ENCODE measurements at regions of chr15 and their contacts with region 1.

Region 1: DNA sequence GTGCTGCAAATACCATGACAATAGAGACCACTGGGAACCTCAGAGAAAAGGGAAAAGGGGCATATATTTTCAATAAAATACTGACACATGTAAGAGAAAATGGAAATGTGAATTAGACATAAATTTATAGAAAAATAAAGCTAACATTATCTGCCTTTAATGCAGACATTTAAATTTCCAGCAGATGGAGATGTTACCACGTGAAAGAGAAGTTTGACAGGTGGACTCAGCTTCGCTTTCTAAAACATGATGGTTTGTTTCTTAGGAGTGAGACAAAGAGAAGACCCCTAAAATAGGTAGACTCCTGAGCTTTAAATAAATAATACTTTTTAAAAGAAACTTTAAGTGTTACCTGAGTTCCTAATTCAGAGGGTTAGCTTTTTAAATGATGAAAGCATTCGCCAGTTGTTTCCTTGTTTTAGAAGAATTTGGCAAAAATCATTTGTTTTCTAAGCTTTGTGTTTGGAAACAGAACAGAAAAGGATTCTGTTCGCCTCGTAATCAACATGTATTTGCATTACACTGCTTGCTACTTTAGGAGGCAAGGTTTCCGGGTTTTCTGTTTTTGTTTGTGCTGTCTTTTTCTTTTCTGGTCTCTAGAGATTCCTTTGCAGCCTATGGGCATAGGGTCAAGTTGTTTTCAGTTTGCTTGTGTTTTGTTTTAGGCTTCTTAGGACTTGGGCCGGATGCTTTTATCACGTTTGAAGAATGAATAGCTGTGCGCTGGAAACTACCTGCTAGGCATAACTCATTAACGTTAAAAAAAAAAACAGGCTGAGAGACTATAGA is 271.4 kb downstream of the THSD4 start:
- DNase-seq: no peak
- ATAC-seq: peak in 3 of 8 donors; percentile 55 to 60 (median 59)
- H3K4me3 ChIP-seq: no peak overlapping the region
- H3K27ac ChIP-seq: no peak overlapping the region
- H3K4me1 ChIP-seq: peaks cover 0 to 52% (median 21%) of the 10 kb centered on the region in 9 donors
- H3K27me3 ChIP-seq: no peaks in the 10 kb centered on the region
- CTCF ChIP-seq: peak in 8 of 9 donors; percentile 28 to 64 (median 52)

Region 2: DNA sequence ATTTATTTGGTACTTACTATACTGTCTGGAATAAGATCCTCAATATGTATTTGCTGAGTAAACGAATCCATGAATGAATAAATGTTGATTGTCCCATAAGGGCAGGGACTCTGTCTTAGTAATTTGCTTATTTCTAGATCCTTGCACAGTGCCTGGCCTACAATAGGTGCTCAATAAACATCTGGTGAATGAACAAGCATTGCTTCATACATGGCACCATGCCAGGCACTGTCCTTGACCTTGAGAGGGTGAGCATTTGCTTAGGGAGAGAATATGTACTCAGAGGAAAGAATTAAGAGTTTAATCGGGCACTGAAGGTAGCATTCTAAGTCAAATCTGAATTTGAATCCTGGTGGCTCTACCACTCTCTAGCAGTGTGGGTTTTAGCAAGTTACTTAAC is 10.7 kb after region 1 on chr15:
- intact Hi-C with region 1: no loop called
- DNase-seq: no peak
- ATAC-seq: no peak
- H3K4me3 ChIP-seq: no peak overlapping the region
- H3K27ac ChIP-seq: no peak overlapping the region
- H3K4me1 ChIP-seq: peaks cover 0 to 33% (median 9%) of the 10 kb centered on the region in 9 donors
- H3K27me3 ChIP-seq: no peaks in the 10 kb centered on the region
- CTCF ChIP-seq: no peak

Region 3: GRCh38 chr15:71437404-71438318 is 51.0 kb after region 1 on chr15:
- intact Hi-C with region 1: loop called in 5 of 10 experiments (anchors 2 to 5 kb)
- DNase-seq: no peak
- ATAC-seq: peak in 2 of 8 donors; percentile 48 to 59
- H3K4me3 ChIP-seq: no peak overlapping the region
- H3K27ac ChIP-seq: peak overlapping the region in 4 of 10 donors; percentile 15 to 32 (median 26)
- H3K4me1 ChIP-seq: peaks cover 0 to 20% (median 6%) of the 10 kb centered on the region in 9 donors
- H3K27me3 ChIP-seq: no peaks in the 10 kb centered on the region
- CTCF ChIP-seq: no peak